Left ventricle myocardium inferior (tissue), 1 donor: ENCODE measurements at regions of chr3 and their contacts with region 1.

Region 1: DNA sequence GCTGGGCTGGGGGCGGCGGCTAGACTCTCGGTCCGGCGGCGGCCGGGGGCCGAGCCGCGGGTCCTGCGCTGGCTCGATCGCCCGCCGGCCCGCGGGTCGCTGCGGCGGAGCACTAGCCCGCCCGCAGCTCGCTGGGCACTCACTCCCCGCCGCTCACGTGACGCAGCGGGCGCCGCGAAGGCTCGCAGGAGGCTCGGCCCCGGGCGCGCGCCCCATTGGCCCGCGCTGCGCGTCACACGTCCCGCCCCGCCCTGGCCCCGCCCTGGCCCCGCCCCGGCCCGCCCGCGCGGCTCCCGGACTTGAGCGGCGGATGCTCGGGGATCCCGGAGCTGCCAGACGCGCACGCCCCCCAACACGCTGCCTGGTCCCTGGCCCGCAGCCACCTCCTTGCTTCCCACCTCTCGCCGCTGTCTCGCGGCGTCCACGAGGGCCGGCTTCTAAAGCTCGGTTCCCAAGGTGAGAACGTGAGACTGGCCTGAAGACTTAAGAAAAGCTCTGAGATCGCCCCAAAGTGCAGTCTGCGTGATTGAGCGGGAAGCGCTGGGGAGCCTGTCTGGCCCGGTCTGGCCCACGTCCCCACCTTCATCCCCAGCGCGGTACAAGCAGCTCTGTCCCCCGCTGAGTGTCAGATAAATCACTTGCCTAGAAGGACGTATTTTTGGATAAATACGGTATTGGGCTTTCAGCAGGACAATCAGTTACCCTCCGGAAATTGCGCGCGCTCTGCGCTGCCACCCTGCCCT is at the start of gene KLF15:
- DNase-seq: peak; percentile 89
- H3K4me3 ChIP-seq: peak within 1 kb of the TSS; percentile 87
- H3K27ac ChIP-seq: peak within 1 kb of the TSS; percentile 97
- H3K4me1 ChIP-seq: peaks cover 57% of the 10 kb centered on the region
- H3K27me3 ChIP-seq: peaks cover 13% of the 10 kb centered on the region
- CTCF ChIP-seq: no peak
- total RNA-seq, gene KLF15: 44.6 TPM

Region 2: DNA sequence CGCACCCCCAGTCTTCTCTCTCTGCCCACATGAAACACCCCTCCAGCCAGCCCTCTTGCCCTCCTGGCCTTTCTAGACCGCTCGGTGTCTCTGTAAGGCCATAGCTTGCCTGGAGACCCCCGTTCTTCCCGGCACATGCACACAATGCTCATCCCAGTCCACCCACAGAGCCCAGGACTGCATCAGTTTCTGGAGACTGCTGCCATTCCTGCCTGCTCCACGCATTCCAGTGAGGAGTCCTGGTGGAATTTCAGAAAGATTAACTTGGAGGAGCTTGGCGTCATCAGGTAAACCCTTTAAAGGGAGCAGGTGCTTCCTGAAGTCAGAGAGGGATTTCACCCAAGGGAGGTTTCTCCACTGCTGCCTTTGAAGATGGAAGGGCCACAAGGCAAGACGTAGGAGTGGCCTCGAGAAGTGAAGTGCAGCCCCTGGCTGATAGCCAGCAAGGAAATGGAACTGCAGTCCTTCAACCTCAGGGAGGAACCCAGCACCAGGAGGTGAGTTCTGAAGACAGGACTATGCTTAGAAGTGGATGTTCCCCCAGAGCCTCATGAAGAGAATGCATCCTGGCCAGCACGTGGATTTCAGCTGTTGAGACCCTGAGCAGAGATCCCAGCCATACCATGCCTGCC is 292.7 kb before region 1 on chr3:
- intact Hi-C with region 1: no loop called
- DNase-seq: no peak
- H3K4me3 ChIP-seq: no peak overlapping the region
- H3K27ac ChIP-seq: no peak overlapping the region
- H3K4me1 ChIP-seq: peaks cover 14% of the 10 kb centered on the region
- H3K27me3 ChIP-seq: no peaks in the 10 kb centered on the region
- CTCF ChIP-seq: no peak

Region 3: GRCh38 chr3:126216416-126216815 is 141.1 kb before region 1 on chr3:
- intact Hi-C with region 1: no loop called
- DNase-seq: no peak
- H3K4me3 ChIP-seq: no peak overlapping the region
- H3K27ac ChIP-seq: no peak overlapping the region
- H3K4me1 ChIP-seq: peaks cover 20% of the 10 kb centered on the region
- H3K27me3 ChIP-seq: peaks cover 35% of the 10 kb centered on the region
- CTCF ChIP-seq: no peak

Region 4: GRCh38 chr3:126267226-126267975 is 90.1 kb before region 1 on chr3:
- intact Hi-C with region 1: loop called (anchors 10 kb)
- DNase-seq: peak; percentile 81
- H3K4me3 ChIP-seq: peak overlapping the region; percentile 57
- H3K27ac ChIP-seq: peak overlapping the region; percentile 94
- H3K4me1 ChIP-seq: peaks cover 60% of the 10 kb centered on the region
- H3K27me3 ChIP-seq: peaks cover 17% of the 10 kb centered on the region
- CTCF ChIP-seq: no peak

Region 5: DNA sequence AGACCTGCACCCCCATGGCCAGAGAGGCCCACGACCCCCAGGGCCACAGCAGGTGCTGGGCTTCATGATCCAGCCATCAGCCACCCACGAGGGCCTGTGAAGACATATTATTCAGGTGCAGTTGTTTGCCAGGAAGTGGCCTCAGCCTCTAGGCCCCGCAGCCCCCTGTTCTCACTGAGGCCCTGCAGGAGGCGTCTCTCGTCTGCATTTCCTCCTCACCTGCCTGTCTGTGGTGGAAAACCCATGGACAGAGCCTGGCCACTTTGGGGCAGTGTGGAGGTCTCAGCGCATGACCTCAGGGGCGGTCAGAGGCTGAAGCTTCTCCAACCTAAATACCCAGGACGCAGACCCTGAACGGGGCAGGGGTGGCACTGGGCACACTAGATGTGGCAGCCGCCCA is 141.5 kb after region 1 on chr3:
- intact Hi-C with region 1: no loop called
- DNase-seq: no peak
- H3K4me3 ChIP-seq: no peak overlapping the region
- H3K27ac ChIP-seq: no peak overlapping the region
- H3K4me1 ChIP-seq: peaks cover 6% of the 10 kb centered on the region
- H3K27me3 ChIP-seq: peaks cover 8% of the 10 kb centered on the region
- CTCF ChIP-seq: no peak